Uterus (tissue), 4 donors: ENCODE measurements at regions of chr1 and their contacts with region 1.

Region 1: DNA sequence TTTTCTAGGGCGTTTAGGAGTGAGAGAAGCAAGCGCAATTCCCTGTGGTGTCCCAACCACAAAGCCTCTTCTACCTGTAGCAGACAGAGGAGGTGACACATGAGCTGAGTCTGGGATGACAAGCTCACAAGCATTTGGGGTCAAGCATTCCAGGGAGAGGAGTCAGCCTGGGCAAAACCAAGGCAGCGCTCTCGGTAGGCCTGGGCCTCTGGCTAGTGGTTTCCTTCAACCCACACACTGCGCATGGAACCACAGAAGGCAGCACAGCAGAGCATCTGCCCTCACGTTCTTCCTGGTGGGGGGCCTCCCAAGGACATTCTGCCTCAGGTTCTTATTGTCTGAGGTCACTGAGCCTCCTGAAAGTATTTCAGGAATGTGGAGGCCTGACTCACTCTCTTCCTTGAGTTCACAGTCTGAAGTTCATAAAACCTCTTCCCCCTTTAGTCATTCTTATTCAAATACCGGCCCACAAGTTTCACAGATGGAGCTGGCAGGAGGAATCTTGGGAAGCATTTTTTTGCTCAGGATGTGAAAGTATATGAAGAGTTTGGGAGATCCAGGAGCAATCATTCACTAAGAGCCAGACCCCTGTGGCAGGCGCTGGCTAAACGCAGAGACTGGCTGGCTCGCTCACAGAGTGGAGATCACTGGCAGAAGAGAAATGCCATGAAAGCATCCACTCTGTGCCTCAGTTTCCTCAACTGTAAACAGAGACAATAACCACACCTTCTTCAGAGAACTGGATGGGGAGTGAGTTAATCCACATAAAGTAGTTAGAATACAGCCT is 26.8 kb downstream of the CCN1 start:
- DNase-seq: no peak
- H3K4me3 ChIP-seq: no peak overlapping the region
- H3K27ac ChIP-seq: no peak overlapping the region
- H3K4me1 ChIP-seq: no peaks in the 10 kb centered on the region
- H3K27me3 ChIP-seq: no peaks in the 10 kb centered on the region
- CTCF ChIP-seq: no peak
- POLR2A ChIP-seq: no peak

Region 2: DNA sequence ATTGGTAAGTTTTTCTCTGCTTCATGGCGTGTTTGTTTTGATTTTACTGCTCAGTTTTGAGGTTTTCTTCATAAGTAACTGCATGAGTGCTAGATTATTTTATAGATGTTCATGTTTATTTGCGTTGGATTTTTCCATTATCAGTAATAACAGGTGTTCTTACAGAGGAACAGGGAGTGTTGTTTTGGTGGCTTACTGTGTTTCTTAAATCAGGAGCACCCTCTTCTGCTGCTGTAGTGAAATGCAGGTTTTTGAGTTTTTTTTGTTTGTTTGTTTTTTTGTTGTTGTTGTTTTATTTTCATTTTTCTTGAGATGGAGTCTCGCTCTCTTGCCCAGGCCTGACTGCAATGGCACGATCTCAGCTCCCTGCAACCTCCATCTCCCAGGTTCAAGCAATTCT is 1065.6 kb before region 1 on chr1:
- intact Hi-C with region 1: no loop called
- DNase-seq: no peak
- H3K4me3 ChIP-seq: no peak overlapping the region
- H3K27ac ChIP-seq: no peak overlapping the region
- H3K4me1 ChIP-seq: no peaks in the 10 kb centered on the region
- H3K27me3 ChIP-seq: no peaks in the 10 kb centered on the region
- CTCF ChIP-seq: peak in 2 of 4 experiments; percentile 14 to 25
- POLR2A ChIP-seq: no peak

Region 3: DNA sequence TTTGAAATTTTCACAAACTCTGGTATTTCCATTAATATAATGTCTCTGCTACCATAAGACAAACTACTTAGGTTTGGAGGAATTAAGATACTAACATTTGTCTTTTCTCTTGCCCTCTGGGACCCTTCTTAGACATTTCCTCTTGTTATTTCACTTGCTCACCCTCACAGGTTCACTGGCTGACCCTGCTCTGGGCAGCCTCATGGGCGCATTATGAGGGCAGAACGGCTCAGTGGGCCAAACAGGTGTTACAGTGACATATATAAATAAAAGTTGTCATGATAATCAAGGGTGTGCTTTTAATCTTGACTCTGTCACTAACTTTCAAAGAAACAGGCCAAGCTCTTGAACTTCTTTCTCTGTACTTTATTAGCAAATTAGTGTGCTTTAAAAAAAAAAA is 54.4 kb after region 1 on chr1:
- intact Hi-C with region 1: loop called (anchors 10 kb)
- DNase-seq: no peak
- H3K4me3 ChIP-seq: no peak overlapping the region
- H3K27ac ChIP-seq: no peak overlapping the region
- H3K4me1 ChIP-seq: no peaks in the 10 kb centered on the region
- H3K27me3 ChIP-seq: no peaks in the 10 kb centered on the region
- CTCF ChIP-seq: no peak
- POLR2A ChIP-seq: no peak